Natural killer cell (primary cell): ENCODE measurements at regions of chr7 and their contacts with region 1.

Region 1: DNA sequence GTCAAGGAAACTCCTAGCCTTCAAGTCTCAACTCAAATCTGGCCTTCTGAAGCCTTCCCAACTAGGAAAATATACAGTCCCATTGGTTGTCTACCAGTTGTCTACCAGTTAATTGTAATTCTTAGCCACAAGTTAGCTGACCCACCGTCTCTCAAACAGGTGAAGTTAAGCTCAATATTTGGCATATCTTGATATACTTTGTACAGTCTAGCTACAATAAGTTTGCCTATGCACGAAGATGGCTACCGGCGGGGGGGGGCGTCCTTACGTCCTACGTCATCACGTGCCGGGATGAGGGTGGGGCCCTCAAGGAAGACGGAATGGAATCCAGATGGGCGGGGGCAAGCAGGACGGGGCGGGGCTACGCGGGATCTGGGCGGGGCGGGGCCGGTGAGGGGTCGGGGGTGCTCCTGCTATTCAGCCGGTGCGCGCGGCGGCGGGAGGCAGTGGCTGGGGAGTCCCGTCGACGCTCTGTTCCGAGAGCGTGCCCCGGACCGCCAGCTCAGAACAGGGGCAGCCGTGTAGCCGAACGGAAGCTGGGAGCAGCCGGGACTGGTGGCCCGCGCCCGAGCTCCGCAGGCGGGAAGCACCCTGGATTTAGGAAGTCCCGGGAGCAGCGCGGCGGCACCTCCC is at the start of gene AHR:
- DNase-seq: peak; percentile 66 to 95
- ATAC-seq: peak; percentile 76 to 86 (median 76)
- H3K4me3 ChIP-seq: peak within 1 kb of the TSS; percentile 76
- H3K4me3 Mint-ChIP-seq: peak within 1 kb of the TSS; percentile 92
- H3K27ac ChIP-seq: peak within 1 kb of the TSS; percentile 79
- H3K27ac Mint-ChIP-seq: peak within 1 kb of the TSS; percentile 70 to 88
- H3K4me1 ChIP-seq: no peaks in the 10 kb centered on the region
- H3K4me1 Mint-ChIP-seq: peaks cover 27% of the 10 kb centered on the region in 2 donors
- H3K27me3 ChIP-seq: no peaks in the 10 kb centered on the region
- H3K27me3 Mint-ChIP-seq: no peaks in the 10 kb centered on the region
- CTCF ChIP-seq: no peak
- total RNA-seq, gene AHR: 20.7 to 54.7 (median 44.9) TPM

Region 2: GRCh38 chr7:16982640-16983350 is 315.5 kb before region 1 on chr7:
- intact Hi-C with region 1: loop called (anchors 1 kb)
- DNase-seq: peak in 1 of 2 donors; percentile 70
- ATAC-seq: peak; percentile 70 to 78 (median 74)
- H3K4me3 ChIP-seq: no peak overlapping the region
- H3K4me3 Mint-ChIP-seq: peak overlapping the region; percentile 64
- H3K27ac ChIP-seq: no peak overlapping the region
- H3K27ac Mint-ChIP-seq: peak overlapping the region in 1 of 2 donors; percentile 29
- H3K4me1 ChIP-seq: no peaks in the 10 kb centered on the region
- H3K4me1 Mint-ChIP-seq: peaks cover 5 to 7% of the 10 kb centered on the region in 2 donors
- H3K27me3 ChIP-seq: no peaks in the 10 kb centered on the region
- H3K27me3 Mint-ChIP-seq: peaks cover 8 to 11% of the 10 kb centered on the region in 2 donors
- CTCF ChIP-seq: peak; percentile 97

Region 3: DNA sequence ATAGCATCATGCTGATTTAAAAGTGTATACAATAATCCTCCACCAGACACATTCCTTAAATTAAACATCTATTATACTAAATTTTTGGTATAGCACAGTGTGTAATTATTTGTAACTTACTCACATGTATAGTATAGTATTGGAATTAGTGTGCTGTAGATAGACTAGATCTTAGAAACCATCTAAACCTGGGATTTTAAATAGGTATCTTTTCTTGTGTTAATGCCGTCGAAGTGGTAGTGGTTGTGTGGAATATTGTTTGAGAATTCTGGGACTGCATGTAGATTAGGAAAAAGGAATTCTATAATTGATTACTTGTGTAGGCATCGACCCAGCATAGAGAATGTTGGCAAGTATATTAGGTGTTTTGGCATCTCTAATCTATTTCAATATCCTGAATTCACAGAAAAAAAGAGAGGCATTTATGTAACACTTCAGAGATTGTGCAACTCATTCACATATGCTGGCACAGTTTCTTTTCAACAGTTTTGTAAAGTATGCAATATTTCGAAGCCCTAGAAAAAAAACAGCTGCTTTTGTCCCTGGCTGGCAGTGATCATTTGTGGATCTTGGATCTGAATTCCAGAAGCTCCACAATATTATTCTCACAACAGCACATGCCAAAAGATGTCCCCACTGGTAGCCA is 271.1 kb before region 1 on chr7:
- intact Hi-C with region 1: loop called (anchors 5 kb)
- DNase-seq: no peak
- ATAC-seq: no peak
- H3K4me3 ChIP-seq: no peak overlapping the region
- H3K4me3 Mint-ChIP-seq: peak overlapping the region; percentile 2
- H3K27ac ChIP-seq: no peak overlapping the region
- H3K27ac Mint-ChIP-seq: peak overlapping the region; percentile 53 to 86
- H3K4me1 ChIP-seq: peaks cover 18% of the 10 kb centered on the region
- H3K4me1 Mint-ChIP-seq: peaks cover 41 to 55% of the 10 kb centered on the region in 2 donors
- H3K27me3 ChIP-seq: no peaks in the 10 kb centered on the region
- H3K27me3 Mint-ChIP-seq: no peaks in the 10 kb centered on the region
- CTCF ChIP-seq: no peak

Region 4: DNA sequence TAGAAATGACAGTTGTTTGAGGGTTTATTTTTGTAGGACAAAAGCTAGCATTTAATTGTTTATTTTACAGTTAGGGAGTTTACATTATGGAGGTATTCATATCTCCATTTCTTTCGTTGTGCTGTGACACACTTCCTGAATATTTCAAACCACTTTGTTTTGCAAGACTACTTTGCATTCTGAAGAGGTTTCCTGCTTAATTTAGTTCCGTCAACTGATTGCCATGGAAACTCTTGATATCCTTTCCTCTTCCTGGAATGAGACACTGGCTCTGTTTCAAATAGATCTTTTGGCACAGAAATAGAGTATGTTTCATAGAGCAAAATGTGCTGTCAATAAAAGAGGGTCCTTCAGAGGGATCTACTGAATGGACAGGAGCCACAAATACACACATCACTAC is 257.0 kb before region 1 on chr7:
- intact Hi-C with region 1: no loop called
- DNase-seq: peak in 1 of 2 donors; percentile 13
- ATAC-seq: peak in 2 of 3 donors; percentile 19 to 49
- H3K4me3 ChIP-seq: no peak overlapping the region
- H3K4me3 Mint-ChIP-seq: peak overlapping the region; percentile 14
- H3K27ac ChIP-seq: no peak overlapping the region
- H3K27ac Mint-ChIP-seq: no peak overlapping the region
- H3K4me1 ChIP-seq: no peaks in the 10 kb centered on the region
- H3K4me1 Mint-ChIP-seq: peaks cover 35 to 45% of the 10 kb centered on the region in 2 donors
- H3K27me3 ChIP-seq: no peaks in the 10 kb centered on the region
- H3K27me3 Mint-ChIP-seq: no peaks in the 10 kb centered on the region
- CTCF ChIP-seq: no peak

Region 5: DNA sequence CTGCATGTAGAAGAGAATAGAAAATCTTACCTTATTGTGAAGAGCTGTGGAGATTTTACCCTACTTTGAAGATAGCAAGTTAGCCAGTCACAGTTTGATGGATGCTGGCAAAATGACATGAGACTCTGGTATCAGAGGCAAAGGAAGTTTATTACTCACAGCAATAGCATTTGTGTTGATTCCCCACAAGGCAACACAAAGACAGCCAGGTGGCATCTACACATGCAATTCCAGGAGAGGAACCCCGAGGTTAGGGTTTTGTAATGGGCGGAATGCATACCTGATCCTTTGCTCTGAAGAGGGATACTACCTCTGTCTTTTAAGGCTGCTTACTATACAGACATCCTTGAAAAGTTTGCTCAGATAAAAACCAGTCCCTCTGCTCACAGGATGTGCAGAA is 59.6 kb after region 1 on chr7:
- intact Hi-C with region 1: no loop called
- DNase-seq: no peak
- ATAC-seq: no peak
- H3K4me3 ChIP-seq: no peak overlapping the region
- H3K4me3 Mint-ChIP-seq: no peak overlapping the region
- H3K27ac ChIP-seq: no peak overlapping the region
- H3K27ac Mint-ChIP-seq: no peak overlapping the region
- H3K4me1 ChIP-seq: no peaks in the 10 kb centered on the region
- H3K4me1 Mint-ChIP-seq: no peaks in the 10 kb centered on the region
- H3K27me3 ChIP-seq: no peaks in the 10 kb centered on the region
- H3K27me3 Mint-ChIP-seq: no peaks in the 10 kb centered on the region
- CTCF ChIP-seq: no peak